Activated CD4-positive, alpha-beta memory T cell treated with anti-CD3 and anti-CD28 coated beads, Interleukin-2, amount 10 ng/mL, durations not matched to agents 7 days and 5 days (primary cell): ENCODE measurements at regions of chr2 and their contacts with region 1.

Region 1: GRCh38 chr2:170369894-170370293 is 191.9 kb downstream of the MYO3B start:
- DNase-seq: no peak
- H3K4me3 Mint-ChIP-seq: no peak overlapping the region
- H3K27ac Mint-ChIP-seq: no peak overlapping the region
- H3K4me1 Mint-ChIP-seq: peaks cover 30% of the 10 kb centered on the region
- H3K27me3 Mint-ChIP-seq: peaks cover 17% of the 10 kb centered on the region

Region 2: DNA sequence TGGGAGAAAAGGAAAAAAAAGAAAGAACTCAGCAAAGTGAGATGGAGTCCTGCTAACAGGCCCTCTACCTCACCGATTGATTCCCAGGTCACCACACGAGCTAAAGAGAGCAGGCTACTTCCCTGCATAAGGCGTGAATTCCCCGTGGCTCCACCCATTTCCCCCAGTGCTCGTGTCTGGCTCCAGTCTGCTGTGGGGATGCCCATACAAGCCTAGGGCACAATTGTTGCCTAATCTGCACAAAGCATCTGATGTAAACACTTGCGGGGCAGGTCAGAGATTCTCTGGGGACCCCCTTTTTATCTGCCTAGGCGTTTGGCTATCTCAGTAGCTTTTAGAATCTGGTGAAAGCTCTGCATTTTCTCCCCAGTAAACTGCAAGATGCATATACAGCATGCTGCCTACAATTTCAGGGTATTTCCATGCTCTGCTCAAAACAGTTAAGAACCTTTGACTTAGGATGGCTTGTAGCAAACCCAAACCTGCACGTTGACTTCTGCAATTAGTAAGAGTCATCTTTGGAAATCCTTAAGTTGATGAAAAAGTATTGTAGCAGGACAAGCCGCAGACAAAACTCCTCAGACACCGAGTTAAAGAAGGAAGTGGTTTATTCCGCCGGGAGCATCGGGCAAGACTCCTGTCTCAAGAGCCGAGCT is 157.1 kb before region 1 on chr2:
- CTCF ChIA-PET with region 1: no interaction called
- POLR2A ChIA-PET with region 1: no interaction called
- DNase-seq: no peak
- H3K4me3 Mint-ChIP-seq: no peak overlapping the region
- H3K27ac Mint-ChIP-seq: no peak overlapping the region
- H3K4me1 Mint-ChIP-seq: no peaks in the 10 kb centered on the region
- H3K27me3 Mint-ChIP-seq: peaks cover 3% of the 10 kb centered on the region

Region 3: GRCh38 chr2:170815746-170816503 is 446.0 kb after region 1 on chr2:
- CTCF ChIA-PET with region 1: interaction called, 23 read pairs
- POLR2A ChIA-PET with region 1: no interaction called
- DNase-seq: peak; percentile 65
- H3K4me3 Mint-ChIP-seq: peak overlapping the region; percentile 65
- H3K27ac Mint-ChIP-seq: peak overlapping the region; percentile 22
- H3K4me1 Mint-ChIP-seq: peaks cover 48% of the 10 kb centered on the region
- H3K27me3 Mint-ChIP-seq: peaks cover 85% of the 10 kb centered on the region